PC-3 (cell line): ENCODE measurements at regions of chr1 and their contacts with region 1.

Region 1: GRCh38 chr1:205977402-205978014 is 25.7 kb downstream of the RAB7B start:
- DNase-seq: peak; percentile 91
- ATAC-seq: peak; percentile 95
- H3K4me3 ChIP-seq: no peak overlapping the region
- H3K27ac ChIP-seq: no peak overlapping the region
- H3K4me1 ChIP-seq: no peaks in the 10 kb centered on the region
- H3K27me3 ChIP-seq: no peaks in the 10 kb centered on the region
- CTCF ChIP-seq: peak; percentile 99

Region 2: DNA sequence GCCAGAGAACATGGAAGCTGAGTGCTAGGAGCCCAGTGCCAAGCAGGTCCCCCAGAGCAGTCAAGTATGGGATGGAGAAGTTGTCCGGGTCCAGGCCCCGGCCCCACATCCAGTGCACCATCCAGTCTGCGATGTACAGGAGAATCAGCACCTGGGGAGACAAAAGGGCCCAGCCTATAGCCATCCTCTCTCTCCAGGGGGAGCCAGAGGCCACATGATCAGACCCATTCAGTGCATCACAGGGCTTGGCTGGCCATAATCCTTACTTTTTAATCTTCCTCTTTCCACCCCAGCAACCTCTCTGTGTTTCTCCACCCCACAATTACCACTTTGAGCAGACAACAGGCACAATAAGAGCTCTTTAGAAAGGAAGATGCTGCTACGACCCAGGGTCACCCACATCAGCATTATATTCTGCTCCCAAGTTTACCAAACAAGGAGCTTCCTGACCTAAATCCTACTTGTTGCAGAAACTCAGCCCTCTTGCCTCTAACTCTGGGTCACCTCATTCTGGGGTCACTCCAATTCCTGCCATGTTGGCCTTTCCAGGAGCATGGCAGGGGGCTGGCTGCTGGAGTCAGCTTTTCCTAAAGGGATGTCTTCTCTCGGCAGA is 185.8 kb before region 1 on chr1:
- CTCF ChIA-PET with region 1: interaction called, 48 read pairs
- POLR2A ChIA-PET with region 1: no interaction called
- intact Hi-C with region 1: loop called (anchors 1 kb)
- DNase-seq: peak; percentile 77
- ATAC-seq: peak; percentile 100
- H3K4me3 ChIP-seq: no peak overlapping the region
- H3K27ac ChIP-seq: no peak overlapping the region
- H3K4me1 ChIP-seq: no peaks in the 10 kb centered on the region
- H3K27me3 ChIP-seq: no peaks in the 10 kb centered on the region
- CTCF ChIP-seq: peak; percentile 93

Region 3: GRCh38 chr1:205849619-205850355 is 127.7 kb before region 1 on chr1 and contains the start of gene PM20D1:
- CTCF ChIA-PET with region 1: interaction called, 10 read pairs
- POLR2A ChIA-PET with region 1: no interaction called
- intact Hi-C with region 1: no loop called
- DNase-seq: no peak
- ATAC-seq: no peak
- H3K4me3 ChIP-seq: no peak within 1 kb of the TSS
- H3K27ac ChIP-seq: no peak within 1 kb of the TSS
- H3K4me1 ChIP-seq: 0 out of 2 replicates have a peak, but pooled peaks cover 6% of the 10 kb centered on the region
- H3K27me3 ChIP-seq: no peaks in the 10 kb centered on the region
- CTCF ChIP-seq: no peak
- total RNA-seq, gene PM20D1: not detected in 2 replicates

Region 4: GRCh38 chr1:205919026-205919746 is 58.3 kb before region 1 on chr1:
- CTCF ChIA-PET with region 1: interaction called, 157 read pairs
- POLR2A ChIA-PET with region 1: no interaction called
- intact Hi-C with region 1: loop called (anchors 1 kb)
- DNase-seq: peak; percentile 94
- ATAC-seq: peak; percentile 97
- H3K4me3 ChIP-seq: no peak overlapping the region
- H3K27ac ChIP-seq: no peak overlapping the region
- H3K4me1 ChIP-seq: no peaks in the 10 kb centered on the region
- H3K27me3 ChIP-seq: no peaks in the 10 kb centered on the region
- CTCF ChIP-seq: peak; percentile 97